Mammary epithelial cell (primary cell): ENCODE measurements at regions of chr17 and their contacts with region 1.

Region 1: GRCh38 chr17:13337864-13338371 is 263.8 kb downstream of the HS3ST3A1 start:
- DNase-seq: peak; percentile 43
- H3K4me3 ChIP-seq: peak overlapping the region; percentile 11 to 47 (median 46)
- H3K27ac ChIP-seq: peak overlapping the region; percentile 34
- H3K4me1 ChIP-seq: peaks cover 4% of the 10 kb centered on the region
- H3K27me3 ChIP-seq: no peaks in the 10 kb centered on the region
- CTCF ChIP-seq: peak; percentile 77 to 85

Region 2: DNA sequence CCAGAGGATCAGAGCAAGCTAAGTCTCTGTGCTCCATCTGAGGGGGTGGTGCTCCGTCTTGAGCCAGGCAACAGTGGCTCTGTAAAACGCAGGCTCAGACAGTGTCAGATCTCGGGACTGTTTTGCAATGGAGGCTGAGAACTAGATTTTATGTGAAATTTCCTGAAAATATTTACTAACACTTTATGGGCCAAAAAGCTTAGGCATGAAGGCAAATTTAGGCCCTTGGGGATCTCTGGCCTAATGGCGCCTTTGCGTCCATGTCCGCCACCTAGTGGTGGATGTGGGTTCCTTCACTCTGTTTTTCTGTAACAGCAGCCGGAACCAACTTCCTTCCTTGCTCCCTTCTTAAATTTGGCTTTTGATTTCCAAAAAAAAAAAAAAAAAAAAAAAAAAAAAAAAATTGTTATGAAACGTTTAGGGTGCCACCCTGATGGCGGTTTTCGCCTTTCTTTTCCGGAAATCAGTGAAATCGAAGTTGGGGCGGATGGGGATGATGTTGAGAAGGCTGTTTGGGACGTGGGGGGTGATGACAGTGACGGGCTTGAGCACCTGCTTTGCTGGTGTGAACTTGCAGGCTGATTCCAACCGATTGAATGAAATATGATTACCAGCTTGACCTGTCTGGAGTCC is 306.1 kb before region 1 on chr17:
- CTCF ChIA-PET with region 1: no interaction called
- dilution Hi-C with region 1: no loop called
- in situ Hi-C with region 1: no loop called
- intact Hi-C with region 1: loop called (anchors 5 kb)
- DNase-seq: peak; percentile 14
- H3K4me3 ChIP-seq: no peak overlapping the region
- H3K27ac ChIP-seq: no peak overlapping the region
- H3K4me1 ChIP-seq: no peaks in the 10 kb centered on the region
- H3K27me3 ChIP-seq: peaks cover 2% of the 10 kb centered on the region
- CTCF ChIP-seq: peak; percentile 85 to 89

Region 3: DNA sequence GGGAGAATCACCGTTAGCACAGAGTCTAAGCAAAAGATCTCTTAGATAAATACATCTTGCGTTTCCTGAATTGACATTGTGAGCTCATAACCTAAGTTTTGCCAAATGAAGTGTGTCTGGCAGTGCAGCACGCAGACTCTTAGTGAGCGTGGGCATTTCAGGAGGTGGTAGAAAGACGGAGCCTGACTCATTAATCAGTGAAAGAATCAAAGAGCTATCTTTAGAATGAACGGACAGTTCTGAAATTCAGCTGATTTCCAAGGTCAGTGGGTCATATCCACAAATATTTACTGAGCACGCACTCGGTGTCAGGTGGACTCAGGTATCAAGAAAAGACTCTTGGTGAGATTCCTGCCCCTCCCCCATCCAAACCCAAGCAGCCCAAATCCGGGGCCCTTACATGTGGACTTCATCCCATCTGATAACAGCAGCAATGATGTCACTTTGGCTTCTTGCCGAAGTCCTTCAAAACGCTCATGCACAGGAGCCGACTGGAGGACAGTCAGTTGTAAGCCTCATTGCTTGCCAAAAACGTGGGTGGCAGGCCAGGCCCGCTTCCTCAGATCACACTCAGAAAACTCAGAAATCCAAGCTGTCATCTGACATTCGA is 78.0 kb after region 1 on chr17:
- CTCF ChIA-PET with region 1: no interaction called
- dilution Hi-C with region 1: no loop called
- in situ Hi-C with region 1: no loop called
- intact Hi-C with region 1: no loop called
- DNase-seq: peak; percentile 39
- H3K4me3 ChIP-seq: no peak overlapping the region
- H3K27ac ChIP-seq: no peak overlapping the region
- H3K4me1 ChIP-seq: peaks cover 18% of the 10 kb centered on the region
- H3K27me3 ChIP-seq: no peaks in the 10 kb centered on the region
- CTCF ChIP-seq: peak in 1 of 2 donors; percentile 6

Region 4: GRCh38 chr17:13442361-13442760 is 104.4 kb after region 1 on chr17:
- CTCF ChIA-PET with region 1: no interaction called
- dilution Hi-C with region 1: no loop called
- in situ Hi-C with region 1: no loop called
- intact Hi-C with region 1: no loop called
- DNase-seq: no peak
- H3K4me3 ChIP-seq: no peak overlapping the region
- H3K27ac ChIP-seq: no peak overlapping the region
- H3K4me1 ChIP-seq: no peaks in the 10 kb centered on the region
- H3K27me3 ChIP-seq: no peaks in the 10 kb centered on the region
- CTCF ChIP-seq: no peak

Region 5: DNA sequence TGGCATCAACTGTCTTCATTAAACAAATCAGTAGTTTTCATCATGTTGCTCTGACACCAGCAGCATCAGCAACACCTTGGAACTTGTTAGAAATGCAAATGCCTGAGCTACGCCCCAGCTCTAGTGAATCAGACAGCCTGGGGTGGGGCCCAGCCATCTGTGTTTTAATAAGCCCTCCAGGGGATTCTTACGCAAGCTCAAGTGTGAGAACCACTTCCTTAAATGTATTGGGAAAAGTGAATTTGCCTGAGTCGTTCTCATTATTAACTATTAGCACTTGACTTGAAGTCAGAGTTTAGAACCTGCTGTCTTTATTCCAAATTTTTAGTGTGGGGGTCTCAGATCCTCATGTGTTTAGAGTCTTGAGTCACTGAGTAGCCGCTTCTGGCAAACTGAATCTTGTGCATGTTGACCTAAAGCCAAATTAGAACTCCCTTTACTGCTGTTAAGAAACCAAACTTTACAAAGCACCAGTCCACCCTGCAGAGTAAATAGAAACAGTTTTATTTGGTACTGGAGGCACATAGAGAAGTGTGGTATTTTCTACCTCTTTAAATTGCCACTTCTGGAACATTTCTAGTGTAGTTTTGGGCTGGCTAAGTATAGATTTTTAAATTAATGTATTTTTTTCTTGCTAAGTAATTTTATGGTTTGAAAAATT is 594.0 kb after region 1 on chr17:
- CTCF ChIA-PET with region 1: no interaction called
- dilution Hi-C with region 1: no loop called
- in situ Hi-C with region 1: no loop called
- intact Hi-C with region 1: loop called (anchors 10 kb)
- DNase-seq: peak; percentile 35
- H3K4me3 ChIP-seq: no peak overlapping the region
- H3K27ac ChIP-seq: no peak overlapping the region
- H3K4me1 ChIP-seq: no peaks in the 10 kb centered on the region
- H3K27me3 ChIP-seq: no peaks in the 10 kb centered on the region
- CTCF ChIP-seq: no peak

Region 6: DNA sequence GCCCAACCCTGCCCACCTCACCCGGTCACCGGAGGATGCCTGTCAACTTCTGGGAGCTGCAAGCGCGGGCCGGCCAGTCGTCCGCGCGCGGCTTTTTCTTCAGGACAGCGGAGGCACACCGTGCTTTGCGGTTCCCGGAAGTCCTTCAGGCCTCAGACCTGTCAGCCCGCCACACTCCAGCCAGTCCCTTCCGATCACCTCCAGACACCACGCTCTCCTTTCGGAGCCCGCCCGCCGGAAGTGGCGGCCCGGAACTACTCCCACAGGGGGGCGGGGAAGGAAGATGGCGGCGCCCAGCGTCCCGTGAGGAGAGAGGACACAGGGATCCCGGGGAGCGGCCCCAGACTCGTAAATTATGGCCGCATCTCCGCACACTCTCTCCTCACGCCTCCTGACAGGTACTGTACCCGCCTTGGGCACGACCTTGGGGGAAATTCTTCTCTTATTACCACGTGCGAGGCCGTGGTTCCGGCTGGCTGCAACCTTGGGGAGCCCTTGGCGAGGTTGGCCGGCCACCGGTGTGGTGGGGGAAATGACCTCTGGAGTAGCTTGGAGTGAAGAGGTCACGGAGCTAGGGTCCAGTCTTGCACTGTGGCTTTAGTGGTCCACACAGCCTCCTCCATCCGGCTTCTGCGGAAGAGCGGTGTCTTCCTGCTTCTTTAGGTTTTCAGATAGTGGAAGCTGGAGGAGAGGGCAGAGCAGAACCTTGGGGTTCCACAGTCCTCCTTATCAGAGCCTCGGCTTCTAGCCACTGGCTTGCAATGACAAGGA is 731.5 kb after region 1 on chr17 and contains the start of gene COX10:
- CTCF ChIA-PET with region 1: no interaction called
- dilution Hi-C with region 1: no loop called
- in situ Hi-C with region 1: no loop called
- intact Hi-C with region 1: loop called (anchors 5 kb)
- DNase-seq: peak; percentile 85
- H3K4me3 ChIP-seq: peak within 1 kb of the TSS; percentile 92 to 97 (median 97)
- H3K27ac ChIP-seq: peak within 1 kb of the TSS; percentile 86
- H3K4me1 ChIP-seq: peaks cover 6% of the 10 kb centered on the region
- H3K27me3 ChIP-seq: no peaks in the 10 kb centered on the region
- CTCF ChIP-seq: no peak
- total RNA-seq, gene COX10: 18.2 to 18.4 TPM